Activated T-helper 2 cell treated with anti-CD3 and anti-CD28 coated beads, Interferon-gamma antibody, Interleukin-2, Interleukin-4, amounts not matched to agents 10 μg/mL and 5 μg/mL and 100 μg/mL, durations not matched to agents 14 hours and 24 hours and 36 hours (primary cell): ENCODE measurements at regions of chr3 and their contacts with region 1.

Region 1: DNA sequence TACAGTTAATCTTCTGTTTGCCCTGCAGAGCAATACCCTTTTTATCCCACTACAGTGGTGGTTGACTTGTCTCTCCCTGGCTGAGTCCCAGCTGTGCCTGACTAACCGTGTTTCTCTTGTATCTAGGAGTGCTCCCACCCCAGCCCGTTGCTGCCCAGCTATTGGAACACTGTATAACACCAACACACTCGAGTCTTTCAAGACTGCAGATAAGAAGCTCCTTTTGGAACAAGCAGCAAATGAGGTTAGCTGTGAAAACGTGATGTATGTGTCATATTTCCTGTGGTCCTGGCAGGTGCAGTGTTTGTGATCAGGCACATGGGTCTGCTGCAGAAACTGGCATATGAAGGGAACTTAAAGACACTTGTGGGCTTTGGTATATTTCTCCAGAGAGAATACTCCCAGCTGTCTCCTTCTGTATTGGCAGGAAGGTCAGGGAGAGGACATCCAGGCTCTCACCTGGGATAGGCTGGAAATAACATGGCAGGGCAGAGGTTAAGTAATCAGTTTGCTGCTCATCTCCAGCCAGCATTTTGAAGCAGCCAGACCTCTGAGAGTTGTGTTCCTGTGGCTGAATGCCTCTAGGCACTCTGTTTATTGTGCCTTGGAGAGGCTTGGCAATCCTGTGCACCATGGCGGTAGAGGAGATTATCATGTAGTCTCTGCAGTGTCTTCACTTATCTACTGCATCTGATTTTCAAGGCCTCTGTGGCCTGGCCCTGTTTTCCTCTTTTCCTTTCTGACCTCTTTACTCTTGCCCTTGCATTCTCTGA is 34.8 kb downstream of the ATG7 start:
- DNase-seq: peak; percentile 27
- H3K4me3 Mint-ChIP-seq: no peak overlapping the region
- H3K27ac Mint-ChIP-seq: peak overlapping the region; percentile 53
- H3K4me1 Mint-ChIP-seq: peaks cover 29% of the 10 kb centered on the region
- H3K27me3 Mint-ChIP-seq: no peaks in the 10 kb centered on the region

Region 2: DNA sequence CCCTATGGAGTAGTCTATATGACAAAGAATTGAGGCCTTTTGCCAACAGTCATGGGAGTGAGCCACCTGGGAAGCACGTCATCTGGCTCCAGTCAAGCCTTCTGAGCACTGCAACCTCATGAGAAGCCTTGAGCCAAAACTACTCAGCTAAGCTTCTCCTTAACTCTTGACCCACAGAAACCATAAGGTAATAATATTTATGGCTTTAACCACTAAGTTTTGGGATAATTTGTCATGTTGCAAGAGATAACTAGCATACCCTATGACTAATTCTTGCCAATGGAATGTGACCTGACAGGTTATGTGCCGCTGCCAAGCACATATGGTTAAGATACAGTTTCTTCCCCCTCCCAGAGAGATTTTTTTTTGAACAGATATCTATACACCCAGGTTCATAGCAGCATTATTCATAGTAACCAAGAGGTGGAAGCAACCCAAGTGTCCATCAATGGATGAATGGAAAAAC is 502.8 kb before region 1 on chr3:
- intact Hi-C with region 1: no loop called
- DNase-seq: no peak
- H3K4me3 Mint-ChIP-seq: no peak overlapping the region
- H3K27ac Mint-ChIP-seq: no peak overlapping the region
- H3K4me1 Mint-ChIP-seq: no peaks in the 10 kb centered on the region
- H3K27me3 Mint-ChIP-seq: peaks cover 2% of the 10 kb centered on the region

Region 3: DNA sequence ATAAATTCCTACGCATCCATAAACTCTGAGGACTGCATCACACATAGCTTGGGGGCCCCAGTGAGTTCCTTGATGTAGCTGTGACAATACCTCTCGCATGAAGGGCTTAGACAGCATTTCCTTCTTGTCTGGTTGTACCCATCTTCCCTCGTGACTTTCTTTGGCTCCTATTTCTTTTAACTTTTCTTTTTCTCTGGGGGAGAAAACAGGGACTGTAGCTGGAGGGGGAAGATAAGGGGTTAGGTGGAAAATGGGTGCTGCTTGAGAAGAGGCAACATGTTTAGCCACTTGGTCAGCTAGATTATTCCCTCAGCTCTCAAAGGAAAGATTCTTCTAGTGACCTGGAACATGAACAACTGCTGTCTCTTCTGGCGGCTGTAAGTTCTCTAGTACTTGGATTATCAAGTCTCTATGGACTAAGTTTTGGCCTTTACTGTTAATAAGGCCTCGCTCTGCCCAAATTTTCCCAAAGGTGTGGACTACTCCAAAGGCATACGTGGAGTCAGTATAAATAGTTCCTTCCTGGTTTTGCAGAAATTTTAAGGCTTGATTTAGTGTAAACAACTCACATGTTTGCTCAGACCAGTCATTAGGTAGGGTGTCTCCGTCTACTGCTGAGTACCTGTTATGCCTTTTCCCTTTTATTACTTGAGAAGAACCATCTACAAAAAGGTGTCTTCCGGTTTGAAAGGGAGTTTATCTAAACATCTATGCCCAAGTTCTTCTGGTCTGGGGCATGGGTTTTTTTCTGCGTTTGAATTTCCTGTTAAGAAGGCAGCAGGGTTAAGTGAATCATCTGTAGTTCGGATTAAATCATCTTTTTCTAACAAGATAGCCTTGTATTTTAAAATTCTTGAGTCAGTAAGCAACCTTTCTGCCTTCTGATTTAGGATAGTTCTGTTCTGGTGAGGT is 55.8 kb before region 1 on chr3:
- intact Hi-C with region 1: no loop called
- DNase-seq: no peak
- H3K4me3 Mint-ChIP-seq: peak overlapping the region; percentile 64
- H3K27ac Mint-ChIP-seq: peak overlapping the region; percentile 81
- H3K4me1 Mint-ChIP-seq: peaks cover 19% of the 10 kb centered on the region
- H3K27me3 Mint-ChIP-seq: no peaks in the 10 kb centered on the region

Region 4: GRCh38 chr3:11290743-11291680 is 16.0 kb before region 1 on chr3:
- intact Hi-C with region 1: loop called (anchors 2 kb)
- DNase-seq: peak; percentile 20
- H3K4me3 Mint-ChIP-seq: peak overlapping the region; percentile 37
- H3K27ac Mint-ChIP-seq: peak overlapping the region; percentile 89
- H3K4me1 Mint-ChIP-seq: peaks cover 52% of the 10 kb centered on the region
- H3K27me3 Mint-ChIP-seq: no peaks in the 10 kb centered on the region